Body of pancreas (tissue), 4 donors: ENCODE measurements at regions of chr16 and their contacts with region 1.

Region 1: DNA sequence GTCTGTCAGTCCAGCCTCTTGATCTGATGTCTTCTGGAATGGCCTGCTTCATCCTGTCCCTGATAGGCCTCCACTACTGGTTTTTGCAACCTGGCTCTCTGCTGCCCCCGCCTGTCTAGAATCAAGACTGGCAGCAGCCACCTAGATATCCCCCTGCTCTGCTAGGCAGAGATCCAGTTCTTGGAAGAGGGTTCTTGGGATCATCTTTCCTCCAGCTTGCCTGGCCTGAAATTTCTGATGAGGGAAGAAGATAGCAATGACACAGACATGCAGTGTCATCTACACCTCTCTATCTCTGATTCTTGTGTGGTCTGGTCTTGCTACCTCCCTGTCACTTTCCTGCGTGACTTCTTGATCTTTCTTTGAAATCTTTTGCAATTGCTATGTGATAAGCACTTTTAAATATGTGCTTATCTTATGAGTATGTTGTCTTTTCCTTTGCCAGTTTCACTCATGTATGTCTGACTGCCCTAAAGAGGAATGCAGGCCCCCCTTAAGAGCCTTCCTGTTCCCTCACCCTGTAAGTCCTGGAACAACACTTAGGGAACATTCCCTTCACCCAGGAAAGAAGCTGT is 20.3 kb upstream of the NFATC3 start:
- DNase-seq: peak; percentile 68 to 74 (median 70)
- ATAC-seq: peak; percentile 81
- H3K4me3 ChIP-seq: no peak overlapping the region
- H3K27ac ChIP-seq: no peak overlapping the region
- H3K4me1 ChIP-seq: peaks cover 6% of the 10 kb centered on the region
- H3K27me3 ChIP-seq: no peaks in the 10 kb centered on the region
- CTCF ChIP-seq: peak; percentile 49 to 75 (median 63)
- POLR2A ChIP-seq: no peak

Region 2: DNA sequence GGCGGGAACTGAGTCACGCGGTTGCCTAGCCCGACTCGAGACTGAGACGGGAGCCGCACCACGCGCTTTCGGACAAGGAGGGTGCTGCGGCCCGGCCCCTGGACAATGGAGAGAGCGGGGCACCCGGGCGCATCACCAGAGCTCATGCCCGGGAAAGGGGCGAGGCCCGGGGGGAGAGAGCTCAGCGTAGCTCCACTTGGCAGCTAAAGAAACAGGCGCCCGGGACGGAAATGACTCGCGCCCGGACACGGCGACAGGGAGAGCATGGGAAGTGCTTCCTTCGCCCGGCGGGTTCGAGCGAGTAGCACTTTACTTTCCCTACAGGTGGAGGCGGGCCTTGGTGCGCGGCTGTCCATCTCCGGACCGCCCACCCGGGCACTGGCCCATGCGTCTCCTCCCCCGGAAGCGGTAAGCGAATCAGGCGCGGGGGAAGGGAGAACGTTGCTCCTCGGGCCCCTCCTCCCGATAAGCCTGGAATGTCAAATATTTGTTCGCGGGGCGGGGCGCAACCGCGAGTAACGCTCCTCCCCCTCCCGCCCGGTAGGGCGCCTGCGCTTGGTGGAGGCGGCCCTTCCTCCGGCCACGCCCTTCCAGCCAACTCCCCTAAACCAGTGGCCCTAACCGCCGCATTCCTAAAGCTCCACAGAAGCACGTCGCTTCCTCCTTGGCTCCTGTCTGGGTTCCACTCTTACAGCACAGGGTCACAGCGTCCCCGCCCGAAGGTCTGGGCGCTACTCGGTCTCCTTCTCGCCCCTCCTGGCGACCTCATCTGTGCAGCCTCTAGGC is 172.6 kb after region 1 on chr16:
- intact Hi-C with region 1: loop called (anchors 10 kb)
- DNase-seq: peak; percentile 99
- ATAC-seq: peak; percentile 71
- H3K4me3 ChIP-seq: peak overlapping the region; percentile 12 to 29
- H3K27ac ChIP-seq: peak overlapping the region; percentile 98 to 99 (median 99)
- H3K4me1 ChIP-seq: peaks cover 51% of the 10 kb centered on the region
- H3K27me3 ChIP-seq: no peaks in the 10 kb centered on the region
- CTCF ChIP-seq: peak in 2 of 7 experiments; percentile 12 to 26
- POLR2A ChIP-seq: peak; percentile 83 to 97 (median 97)